ENCODE measurements at regions of chr17 and their contacts with region 1.

Region 1: DNA sequence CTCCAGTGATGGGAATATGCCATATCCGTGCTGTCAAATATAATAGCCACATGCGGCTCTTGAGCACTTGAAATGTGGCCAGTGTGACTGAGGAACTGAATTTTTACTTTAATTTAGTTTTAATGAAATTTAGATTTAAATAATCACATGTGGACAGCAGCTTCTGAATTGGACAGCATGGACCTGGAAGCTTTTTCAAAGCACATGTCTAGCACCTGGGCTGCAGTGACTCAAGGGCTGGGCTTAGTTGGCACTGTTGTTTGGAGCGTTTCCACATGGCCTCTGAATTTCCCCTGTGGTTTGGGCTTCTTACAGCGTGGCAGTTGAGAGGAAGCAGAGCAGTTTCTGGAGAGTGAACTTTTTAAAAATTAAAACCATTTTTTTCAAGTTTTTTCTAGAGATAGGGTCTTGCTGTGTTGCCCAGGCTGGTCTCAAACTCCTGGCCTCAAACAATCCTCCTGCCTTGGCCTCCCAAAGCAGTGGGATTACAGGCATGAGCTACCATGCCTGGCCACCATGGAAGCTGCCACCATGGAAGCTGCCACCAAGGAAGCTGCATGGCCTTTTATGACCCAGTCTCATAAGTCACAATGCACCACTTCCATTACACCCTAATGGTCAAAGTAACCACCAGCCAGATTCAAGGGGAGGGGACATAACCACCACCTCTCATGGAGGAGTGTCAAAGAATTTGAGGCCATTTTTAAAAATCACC is 6.7 kb upstream of the TOB1 start:
- DNase-seq: no peak
- ATAC-seq: peak; percentile 62

Region 2: GRCh38 chr17:50883850-50884438 is 11.1 kb after region 1 on chr17:
- intact Hi-C with region 1: loop called (anchors 1 kb)
- DNase-seq: no peak
- ATAC-seq: peak; percentile 55

Measured in Right ventricle myocardium inferior (tissue), 1 donor.